ENCODE measurements at regions of chrX and their contacts with region 1.

Region 1: DNA sequence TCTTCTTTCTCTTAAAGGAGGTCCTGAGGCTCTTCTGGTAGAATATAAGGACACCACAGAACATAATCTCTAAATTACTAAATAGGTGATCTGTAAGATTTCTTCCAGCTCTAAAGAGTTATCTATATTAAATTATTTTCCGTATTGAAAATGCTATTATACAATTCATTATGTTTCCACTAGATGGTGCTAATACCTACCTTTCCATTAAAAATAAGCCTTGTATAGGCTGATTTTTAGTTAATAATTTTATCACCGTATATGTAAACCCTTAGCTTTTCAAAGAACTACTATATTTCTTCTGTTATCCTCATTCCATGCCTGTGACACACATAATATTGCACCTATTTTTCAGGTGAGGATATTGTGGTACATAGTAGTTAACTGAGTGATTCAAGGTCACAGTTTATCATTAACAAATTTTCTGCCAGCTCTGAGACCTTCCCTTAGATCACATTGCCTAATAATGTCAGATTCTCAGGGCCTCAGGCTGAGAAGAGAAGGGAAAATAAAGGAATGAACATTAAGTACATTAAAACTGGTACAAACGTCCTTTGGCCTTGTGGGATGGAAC is 138.8 kb downstream of the TEX11 start:
- DNase-seq: no peak
- H3K4me3 Mint-ChIP-seq: no peak overlapping the region
- H3K27ac Mint-ChIP-seq: no peak overlapping the region
- H3K4me1 Mint-ChIP-seq: no peaks in the 10 kb centered on the region
- H3K27me3 Mint-ChIP-seq: no peaks in the 10 kb centered on the region

Region 2: DNA sequence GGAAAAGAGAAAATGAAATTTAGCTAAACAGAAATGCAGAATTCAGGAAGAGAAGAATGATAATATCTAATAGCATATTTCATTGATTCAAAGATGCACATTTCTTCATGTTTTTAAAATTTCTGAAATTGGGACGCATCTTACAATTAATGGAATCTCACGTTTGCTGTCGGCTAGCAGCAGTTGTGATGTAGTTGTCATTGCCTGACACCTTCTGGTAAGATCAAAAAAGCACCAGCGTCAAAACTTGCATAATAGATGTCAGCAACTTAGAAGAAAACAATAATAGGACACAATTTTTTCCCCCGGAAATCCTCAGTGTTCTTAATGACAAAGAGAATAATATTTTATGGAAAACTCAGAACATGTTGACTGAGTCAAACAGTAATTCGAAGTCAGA is 191.0 kb after region 1 on chrX:
- CTCF ChIA-PET with region 1: no interaction called
- intact Hi-C with region 1: loop called (anchors 5 kb)
- DNase-seq: no peak
- H3K4me3 Mint-ChIP-seq: no peak overlapping the region
- H3K27ac Mint-ChIP-seq: no peak overlapping the region
- H3K4me1 Mint-ChIP-seq: no peaks in the 10 kb centered on the region
- H3K27me3 Mint-ChIP-seq: peaks cover 5% of the 10 kb centered on the region

Region 3: DNA sequence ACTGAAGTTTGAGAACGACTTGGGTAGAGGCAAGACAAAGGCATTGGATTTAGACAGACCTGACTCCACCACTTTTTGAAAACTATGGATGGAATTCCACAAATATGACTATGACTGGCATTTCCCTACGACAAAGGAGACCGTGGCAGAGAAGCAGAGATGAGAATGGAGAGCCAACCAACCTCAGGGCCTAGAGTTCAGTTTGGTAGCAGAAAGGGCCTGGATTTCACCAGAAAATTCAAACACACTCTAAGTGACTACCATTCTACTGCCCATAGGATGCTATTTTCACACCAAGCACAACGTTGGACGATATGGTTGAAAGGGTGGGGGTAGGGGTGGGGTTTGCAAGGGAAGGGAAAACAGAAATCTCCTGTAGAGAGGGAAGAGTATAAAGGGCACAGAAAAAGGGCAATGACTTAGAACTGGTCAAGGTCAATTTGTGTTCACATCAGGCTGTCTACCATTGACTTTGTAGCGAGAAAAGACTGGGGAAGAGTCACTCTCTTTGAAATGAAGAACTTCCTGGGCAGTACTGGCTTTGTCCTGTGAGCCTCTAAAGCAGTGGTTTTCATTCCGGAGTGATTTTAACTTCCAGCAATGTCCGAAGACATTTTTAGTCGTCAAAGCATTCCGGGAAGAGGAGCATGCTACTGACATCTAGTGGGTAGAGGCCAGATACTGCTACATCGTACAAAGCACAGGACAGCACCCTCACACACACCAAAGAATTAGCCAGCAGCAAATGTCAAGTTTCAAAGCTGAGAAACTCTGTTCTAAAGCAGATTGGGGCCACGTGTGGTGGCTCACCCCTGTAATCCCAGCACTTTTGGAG is 209.4 kb after region 1 on chrX:
- CTCF ChIA-PET with region 1: no interaction called
- intact Hi-C with region 1: loop called (anchors 5 kb)
- DNase-seq: peak; percentile 10
- H3K4me3 Mint-ChIP-seq: no peak overlapping the region
- H3K27ac Mint-ChIP-seq: no peak overlapping the region
- H3K4me1 Mint-ChIP-seq: no peaks in the 10 kb centered on the region
- H3K27me3 Mint-ChIP-seq: no peaks in the 10 kb centered on the region

Measured in activated naive CD4-positive, alpha-beta T cell treated with anti-CD3 and anti-CD28 coated beads for 36 hours (primary cell).